HepG2 (cell line): ENCODE measurements at regions of chr1 and their contacts with region 1.

Region 1: DNA sequence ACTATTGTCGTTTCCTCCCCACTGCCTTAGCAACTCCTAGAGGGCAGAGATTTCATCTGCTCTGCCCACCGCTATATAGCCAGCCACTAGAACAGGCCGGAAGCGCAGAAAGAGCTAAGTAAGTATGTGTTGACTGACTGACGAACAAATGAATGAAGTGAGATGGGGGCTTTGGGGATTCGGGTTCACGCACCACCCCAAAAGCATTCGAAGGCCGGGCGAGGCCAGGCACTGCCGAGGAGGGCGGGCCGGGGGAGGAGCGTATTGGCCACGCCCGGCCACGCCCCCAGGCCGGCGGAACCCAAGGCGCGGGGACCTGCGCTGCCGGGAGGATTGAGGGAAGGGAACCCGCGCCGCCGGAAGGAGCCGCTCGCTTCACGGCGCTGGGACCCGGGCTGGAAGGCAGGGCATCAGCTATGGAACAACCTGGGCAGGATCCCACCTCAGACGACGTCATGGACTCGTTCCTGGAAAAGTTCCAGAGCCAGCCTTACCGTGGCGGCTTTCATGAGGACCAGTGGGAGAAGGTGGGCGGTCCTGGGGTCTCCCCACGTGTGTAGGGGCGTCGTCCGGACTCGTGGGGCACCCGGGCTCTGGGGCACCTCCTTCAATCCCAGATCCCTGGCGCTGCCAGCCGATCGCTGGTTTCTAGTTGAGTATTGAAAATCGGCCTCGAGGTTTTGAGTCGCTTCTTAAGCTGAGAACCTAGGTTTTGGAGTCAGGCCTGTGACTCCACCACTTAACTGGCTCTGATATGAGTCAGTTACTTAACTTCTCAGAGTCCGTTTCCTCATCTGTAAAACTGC is at the start of gene TTC4:
- DNase-seq: peak; percentile 66
- ATAC-seq: peak; percentile 96
- H3K4me3 ChIP-seq: peak within 1 kb of the TSS; percentile 78 to 88 (median 85)
- H3K27ac ChIP-seq: peak within 1 kb of the TSS; percentile 50
- H3K4me1 ChIP-seq: peaks cover 37% of the 10 kb centered on the region
- H3K27me3 ChIP-seq: peaks cover 0 to 14% of the 10 kb centered on the region in 2 experiments; a peak in 2 of 5 replicates
- CTCF ChIP-seq: peak; percentile 47
- EP300 ChIP-seq: no peak; a peak in 1 of 4 replicates
- POLR2A ChIP-seq: peak; percentile 89 to 92
- RAD21 ChIP-seq: peak; percentile 64
- total RNA-seq, gene TTC4: 24.7 and 36.9 TPM in 2 replicates

Region 2: GRCh38 chr1:53837924-53838652 is 877.6 kb before region 1 on chr1 and contains the start of gene NDC1:
- CTCF ChIA-PET with region 1: no interaction called
- POLR2A ChIA-PET with region 1: no interaction called
- in situ Hi-C with region 1: no loop called
- intact Hi-C with region 1: loop called (anchors 5 kb)
- DNase-seq: peak; percentile 98
- ATAC-seq: peak; percentile 97
- H3K4me3 ChIP-seq: peak within 1 kb of the TSS; percentile 68 to 94 (median 82)
- H3K27ac ChIP-seq: peak within 1 kb of the TSS; percentile 96
- H3K4me1 ChIP-seq: peaks cover 24% of the 10 kb centered on the region
- H3K27me3 ChIP-seq: no peaks in the 10 kb centered on the region
- CTCF ChIP-seq: peak; percentile 72
- EP300 ChIP-seq: peak; percentile 13 to 36; a peak in 1 of 4 replicates
- POLR2A ChIP-seq: peak; percentile 75 to 77; a peak in 3 of 4 replicates
- RAD21 ChIP-seq: 0 out of 2 replicates have a peak, but pooled peaks have one; percentile 27
- total RNA-seq, gene NDC1: 44.6 and 50.9 TPM in 2 replicates

Region 3: DNA sequence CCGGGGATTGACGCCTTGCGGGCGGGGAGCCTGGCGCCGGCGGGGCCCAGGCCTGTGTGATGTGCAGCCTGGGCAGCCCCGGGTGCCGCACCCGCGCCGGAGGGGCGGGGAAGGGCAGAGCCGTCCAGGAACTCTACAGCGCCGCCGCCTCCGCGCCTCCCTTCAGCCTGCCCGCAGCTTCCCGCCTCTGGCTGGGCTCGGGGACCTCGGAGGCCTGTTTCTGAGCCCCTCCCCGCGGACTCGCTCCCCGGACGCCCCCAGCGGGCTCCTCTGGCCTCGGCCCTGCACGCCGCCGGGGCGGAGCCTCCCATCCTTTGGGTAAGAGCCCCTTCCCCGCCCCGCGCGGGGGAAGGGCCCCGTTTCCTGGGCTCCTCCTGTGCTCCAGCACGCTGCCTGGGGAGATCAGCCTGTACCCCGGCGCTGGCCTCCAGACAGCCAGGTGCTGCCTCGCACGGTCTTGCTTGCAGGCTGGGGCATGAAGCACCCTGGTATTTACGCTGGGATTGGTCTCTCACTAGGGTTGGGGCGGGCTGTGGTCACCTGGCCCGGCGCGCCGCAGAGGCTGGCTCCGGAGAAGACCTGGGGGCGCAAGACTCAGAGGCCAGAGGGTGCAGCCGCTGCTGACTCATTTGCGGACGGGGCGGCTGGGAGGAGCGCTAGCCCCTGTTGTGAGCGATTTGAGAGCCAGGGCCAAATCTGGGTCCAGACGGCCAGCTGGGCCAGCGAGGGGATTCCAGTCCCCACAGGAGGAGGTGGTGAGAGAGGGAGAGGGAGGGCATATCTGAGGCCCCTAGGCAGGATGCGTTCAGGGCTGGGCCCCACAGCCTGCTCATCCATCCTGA is 173.4 kb before region 1 on chr1:
- CTCF ChIA-PET with region 1: no interaction called
- POLR2A ChIA-PET with region 1: no interaction called
- in situ Hi-C with region 1: no loop called
- intact Hi-C with region 1: loop called (anchors 2 kb)
- DNase-seq: peak; percentile 81
- ATAC-seq: peak; percentile 93
- H3K4me3 ChIP-seq: peak overlapping the region; percentile 60 to 81 (median 68)
- H3K27ac ChIP-seq: peak overlapping the region; percentile 88
- H3K4me1 ChIP-seq: peaks cover 59% of the 10 kb centered on the region
- H3K27me3 ChIP-seq: no peaks in the 10 kb centered on the region
- CTCF ChIP-seq: peak; percentile 46
- EP300 ChIP-seq: no peak; a peak in 1 of 4 replicates
- POLR2A ChIP-seq: peak; percentile 45 to 64; a peak in 3 of 4 replicates
- RAD21 ChIP-seq: peak; percentile 59; the same call in 1 of the 2 replicates

Region 4: DNA sequence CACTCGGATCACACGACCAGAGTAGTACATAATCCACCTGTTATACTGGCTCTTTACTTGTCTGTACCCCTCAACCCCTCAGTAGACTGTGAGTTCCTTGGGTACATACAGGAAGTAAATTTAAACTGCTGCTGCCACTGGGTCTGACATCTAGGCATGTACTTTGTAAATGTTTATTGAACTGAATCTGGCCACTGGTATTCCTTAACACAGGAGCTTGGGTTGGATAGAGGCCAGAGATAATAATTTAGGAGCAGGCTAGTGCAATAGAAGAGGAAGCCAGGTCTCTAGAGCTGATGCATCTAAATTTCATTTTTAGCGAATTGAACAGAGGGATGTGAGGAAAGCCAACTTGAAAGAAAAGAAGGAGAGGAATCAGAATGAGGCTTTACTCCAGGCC is 12.3 kb after region 1 on chr1:
- CTCF ChIA-PET with region 1: no interaction called
- POLR2A ChIA-PET with region 1: interaction called, 4 read pairs
- in situ Hi-C with region 1: no loop called
- intact Hi-C with region 1: loop called (anchors 2 kb)
- DNase-seq: no peak
- ATAC-seq: no peak
- H3K4me3 ChIP-seq: no peak overlapping the region
- H3K27ac ChIP-seq: no peak overlapping the region
- H3K4me1 ChIP-seq: no peaks in the 10 kb centered on the region
- H3K27me3 ChIP-seq: no peaks in the 10 kb centered on the region
- CTCF ChIP-seq: no peak
- EP300 ChIP-seq: no peak
- POLR2A ChIP-seq: no peak
- RAD21 ChIP-seq: no peak

Region 5: DNA sequence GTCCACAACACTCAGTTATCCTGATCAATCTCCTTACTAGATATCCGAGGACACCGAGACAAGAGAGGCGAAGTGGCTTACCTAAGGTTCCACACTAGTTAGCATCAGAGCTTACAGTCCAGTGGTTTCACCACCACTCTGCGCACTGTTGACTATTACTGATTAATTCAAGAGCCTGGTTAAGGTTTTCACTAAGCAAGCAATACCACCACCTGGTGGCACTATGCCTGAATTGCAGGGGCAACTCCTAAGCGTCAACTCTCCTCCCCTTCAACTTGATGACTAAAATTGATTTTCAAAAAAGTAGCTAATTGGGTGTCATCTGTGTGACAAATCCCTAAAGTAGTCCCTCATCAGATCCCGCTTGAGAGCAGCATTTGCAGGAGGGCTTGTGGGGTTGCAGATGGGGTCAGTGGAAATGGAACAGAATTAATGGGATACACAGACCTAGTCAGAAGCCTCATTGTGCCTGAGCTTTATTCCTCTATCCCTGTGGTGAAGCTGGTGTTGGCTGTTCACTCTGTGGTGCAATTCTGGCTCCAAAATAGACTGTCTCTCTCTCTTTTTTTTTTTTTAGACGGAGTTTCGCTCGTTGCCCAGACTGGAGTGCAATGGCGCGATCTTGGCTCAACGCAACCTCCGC is 76.3 kb after region 1 on chr1:
- CTCF ChIA-PET with region 1: no interaction called
- POLR2A ChIA-PET with region 1: no interaction called
- in situ Hi-C with region 1: no loop called
- intact Hi-C with region 1: loop called (anchors 5 kb)
- DNase-seq: peak; percentile 65
- ATAC-seq: peak; percentile 55
- H3K4me3 ChIP-seq: no peak overlapping the region
- H3K27ac ChIP-seq: no peak overlapping the region
- H3K4me1 ChIP-seq: peaks cover 44% of the 10 kb centered on the region
- H3K27me3 ChIP-seq: peaks cover 0 to 7% of the 10 kb centered on the region in 2 experiments; a peak in 1 of 5 replicates
- CTCF ChIP-seq: peak; percentile 83
- EP300 ChIP-seq: no peak
- POLR2A ChIP-seq: no peak
- RAD21 ChIP-seq: peak; percentile 66; the same call in 1 of the 2 replicates